ENCODE measurements at regions of chr2 and their contacts with region 1.

Region 1: GRCh38 chr2:160210599-160211138 is 10.6 kb upstream of the ITGB6 start:
- DNase-seq: peak; percentile 92
- H3K4me3 ChIP-seq: no peak overlapping the region
- H3K27ac ChIP-seq: peak overlapping the region; percentile 91
- H3K4me1 ChIP-seq: peaks cover 60% of the 10 kb centered on the region
- H3K27me3 ChIP-seq: no peaks in the 10 kb centered on the region
- CTCF ChIP-seq: peak; percentile 84 to 98
- POLR2A ChIP-seq: no peak

Region 2: DNA sequence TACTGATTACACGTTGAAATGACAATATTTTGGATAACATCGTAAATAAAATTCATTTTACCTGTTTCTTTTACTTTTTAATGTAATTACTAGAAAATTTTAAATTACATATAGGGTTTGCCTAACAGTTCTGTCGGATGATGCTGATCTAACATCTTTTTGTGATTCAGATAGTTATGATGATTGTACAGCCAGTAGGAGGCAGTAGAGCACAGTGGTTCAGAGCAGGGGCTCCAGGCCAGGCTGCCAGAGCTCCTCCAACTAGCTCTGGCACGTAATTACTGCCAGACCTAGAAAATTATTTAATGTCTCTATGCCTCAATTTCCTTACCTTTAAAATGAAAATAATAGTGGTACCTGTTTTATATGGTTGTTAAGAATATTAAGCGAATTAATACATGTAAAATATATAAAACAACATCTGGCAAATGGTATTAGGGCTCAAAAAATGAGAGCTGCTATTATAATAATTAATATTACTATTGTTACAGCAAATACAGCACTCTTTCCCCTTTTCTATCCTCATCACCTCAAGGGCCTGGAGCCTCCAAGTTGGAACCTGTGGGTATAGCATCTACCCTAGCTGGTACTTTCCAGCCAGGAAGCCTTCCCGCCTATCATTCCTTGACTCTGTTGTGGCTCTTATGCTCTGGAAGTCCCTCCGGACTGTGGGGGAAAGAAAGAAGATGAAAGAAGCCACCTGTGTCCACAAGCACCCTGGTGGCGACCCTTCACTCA is 100.6 kb before region 1 on chr2:
- CTCF ChIA-PET with region 1: interaction called, 84 read pairs
- POLR2A ChIA-PET with region 1: no interaction called
- dilution Hi-C with region 1: no loop called
- intact Hi-C with region 1: loop called (anchors 1 kb)
- DNase-seq: peak; percentile 83
- H3K4me3 ChIP-seq: no peak overlapping the region
- H3K27ac ChIP-seq: no peak overlapping the region
- H3K4me1 ChIP-seq: no peaks in the 10 kb centered on the region
- H3K27me3 ChIP-seq: no peaks in the 10 kb centered on the region
- CTCF ChIP-seq: peak; percentile 66 to 72
- POLR2A ChIP-seq: no peak

Region 3: GRCh38 chr2:160194946-160195345 is 15.7 kb before region 1 on chr2:
- CTCF ChIA-PET with region 1: interaction called, 12 read pairs
- POLR2A ChIA-PET with region 1: no interaction called
- dilution Hi-C with region 1: no loop called
- intact Hi-C with region 1: no loop called
- DNase-seq: no peak
- H3K4me3 ChIP-seq: no peak overlapping the region
- H3K27ac ChIP-seq: no peak overlapping the region
- H3K4me1 ChIP-seq: no peaks in the 10 kb centered on the region
- H3K27me3 ChIP-seq: no peaks in the 10 kb centered on the region
- CTCF ChIP-seq: no peak
- POLR2A ChIP-seq: no peak

Region 4: DNA sequence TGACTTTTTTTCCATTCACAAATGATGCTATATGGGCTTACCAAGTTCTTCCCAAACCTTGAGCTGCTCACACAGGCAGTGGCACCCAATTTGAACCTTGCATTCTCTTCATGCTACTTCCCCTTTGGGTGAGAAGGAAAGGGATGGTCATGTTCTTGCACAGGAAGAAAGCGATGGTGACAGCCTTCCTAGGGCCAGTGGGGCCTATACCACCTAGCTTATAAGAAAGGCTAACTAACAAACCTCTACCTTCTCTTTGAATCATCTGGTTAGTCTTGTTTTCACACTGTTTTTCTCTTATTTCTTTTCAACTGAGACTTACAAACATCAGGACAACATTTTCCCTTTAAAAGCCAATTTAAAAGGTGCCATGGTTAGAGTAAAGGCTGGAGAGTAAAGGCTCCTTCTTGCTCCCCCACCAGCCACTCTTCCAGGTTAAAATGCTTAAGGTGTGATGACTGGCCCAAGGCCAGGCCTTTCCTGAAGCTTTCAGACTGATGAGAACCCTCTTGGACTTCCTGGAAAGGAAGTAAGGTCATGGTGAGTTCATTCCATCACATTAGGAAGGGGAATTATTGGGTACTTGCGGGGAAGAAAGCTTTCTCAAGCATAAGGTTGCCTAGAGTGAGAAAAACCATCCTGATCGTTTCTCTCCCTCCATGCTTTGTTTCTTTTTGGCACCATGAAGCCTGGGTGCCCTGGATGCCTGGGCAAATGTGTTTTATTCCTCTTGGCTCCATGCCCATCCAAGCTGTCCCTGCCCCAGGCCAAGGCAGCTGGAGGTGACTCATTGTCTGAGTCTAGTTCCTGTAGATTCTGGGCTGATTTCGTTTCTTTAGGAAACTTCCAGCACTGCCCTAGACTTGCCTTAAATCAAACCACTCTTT is 30.8 kb after region 1 on chr2:
- CTCF ChIA-PET with region 1: interaction called, 11 read pairs
- POLR2A ChIA-PET with region 1: no interaction called
- dilution Hi-C with region 1: no loop called
- intact Hi-C with region 1: loop called (anchors 1 kb)
- DNase-seq: peak; percentile 95
- H3K4me3 ChIP-seq: no peak overlapping the region
- H3K27ac ChIP-seq: peak overlapping the region; percentile 82
- H3K4me1 ChIP-seq: peaks cover 33% of the 10 kb centered on the region
- H3K27me3 ChIP-seq: no peaks in the 10 kb centered on the region
- CTCF ChIP-seq: no peak
- POLR2A ChIP-seq: no peak

Region 5: DNA sequence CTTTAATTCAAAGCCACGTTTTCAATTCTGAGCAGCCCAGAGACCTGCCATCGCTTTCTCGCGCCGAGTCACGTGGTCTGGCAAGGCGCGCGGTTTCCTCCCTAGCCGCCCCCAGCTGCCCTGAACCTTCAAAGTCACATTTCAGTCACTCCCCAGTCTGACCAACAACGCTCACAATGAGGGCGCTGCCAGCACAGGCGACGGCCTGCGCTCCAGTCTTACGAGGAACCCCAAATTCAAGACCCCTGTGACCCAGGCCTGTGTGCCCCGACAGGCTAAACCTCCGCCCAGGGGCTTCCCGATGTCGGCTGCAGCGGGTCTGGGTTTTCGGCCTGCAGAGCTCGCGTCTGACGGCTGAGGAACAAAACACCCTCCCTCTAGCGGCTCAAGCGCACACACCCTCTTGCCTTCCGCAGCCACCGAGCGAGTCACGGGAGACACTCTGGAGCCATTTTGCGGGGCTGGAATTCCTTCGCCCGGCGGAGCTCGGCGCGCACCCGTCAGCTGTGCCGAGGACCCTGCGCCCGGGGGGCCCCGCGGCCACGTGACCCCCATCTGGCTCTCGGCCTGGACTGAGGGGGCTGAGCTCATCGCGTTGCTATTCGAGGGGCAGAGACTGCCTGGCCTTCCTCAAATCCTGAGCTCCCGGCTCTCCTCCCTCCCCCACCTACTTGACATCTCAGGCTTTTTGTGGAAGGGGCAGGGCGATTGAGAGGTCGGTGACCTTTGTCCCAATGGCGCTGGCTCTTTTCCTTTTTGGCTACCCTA is 59.3 kb after region 1 on chr2:
- CTCF ChIA-PET with region 1: interaction called, 29 read pairs
- POLR2A ChIA-PET with region 1: interaction called, 3 read pairs
- dilution Hi-C with region 1: no loop called
- intact Hi-C with region 1: loop called (anchors 1 kb)
- DNase-seq: peak; percentile 92
- H3K4me3 ChIP-seq: peak overlapping the region in 2 of 3 experiments; percentile 34 to 44
- H3K27ac ChIP-seq: peak overlapping the region; percentile 93
- H3K4me1 ChIP-seq: peaks cover 25% of the 10 kb centered on the region
- H3K27me3 ChIP-seq: no peaks in the 10 kb centered on the region
- CTCF ChIP-seq: peak; percentile 65 to 79
- POLR2A ChIP-seq: peak; percentile 76

Region 6: DNA sequence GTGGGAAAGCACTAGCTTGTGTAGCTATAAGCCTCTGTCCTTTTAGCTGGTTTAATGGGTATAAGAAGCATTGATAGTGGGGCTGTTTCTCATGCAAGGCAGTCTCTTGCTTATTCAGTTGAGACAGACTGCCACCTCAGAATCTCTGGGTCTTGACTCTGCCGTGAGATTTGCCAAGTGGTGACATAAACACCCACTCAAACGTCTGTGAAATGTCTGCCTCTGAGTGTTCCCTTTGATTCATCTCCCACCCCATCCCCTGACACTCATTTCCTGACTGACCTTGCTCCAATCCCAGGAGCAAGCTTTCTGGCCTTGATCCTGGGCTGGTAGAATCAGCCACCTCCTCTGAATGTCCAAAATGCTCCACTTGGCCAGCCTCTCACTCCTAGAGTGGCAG is 424.8 kb after region 1 on chr2:
- CTCF ChIA-PET with region 1: no interaction called
- POLR2A ChIA-PET with region 1: no interaction called
- dilution Hi-C with region 1: no loop called
- intact Hi-C with region 1: loop called (anchors 1 kb)
- DNase-seq: no peak
- H3K4me3 ChIP-seq: no peak overlapping the region
- H3K27ac ChIP-seq: no peak overlapping the region
- H3K4me1 ChIP-seq: peaks cover 9% of the 10 kb centered on the region
- H3K27me3 ChIP-seq: no peaks in the 10 kb centered on the region
- CTCF ChIP-seq: no peak
- POLR2A ChIP-seq: no peak

Region 7: DNA sequence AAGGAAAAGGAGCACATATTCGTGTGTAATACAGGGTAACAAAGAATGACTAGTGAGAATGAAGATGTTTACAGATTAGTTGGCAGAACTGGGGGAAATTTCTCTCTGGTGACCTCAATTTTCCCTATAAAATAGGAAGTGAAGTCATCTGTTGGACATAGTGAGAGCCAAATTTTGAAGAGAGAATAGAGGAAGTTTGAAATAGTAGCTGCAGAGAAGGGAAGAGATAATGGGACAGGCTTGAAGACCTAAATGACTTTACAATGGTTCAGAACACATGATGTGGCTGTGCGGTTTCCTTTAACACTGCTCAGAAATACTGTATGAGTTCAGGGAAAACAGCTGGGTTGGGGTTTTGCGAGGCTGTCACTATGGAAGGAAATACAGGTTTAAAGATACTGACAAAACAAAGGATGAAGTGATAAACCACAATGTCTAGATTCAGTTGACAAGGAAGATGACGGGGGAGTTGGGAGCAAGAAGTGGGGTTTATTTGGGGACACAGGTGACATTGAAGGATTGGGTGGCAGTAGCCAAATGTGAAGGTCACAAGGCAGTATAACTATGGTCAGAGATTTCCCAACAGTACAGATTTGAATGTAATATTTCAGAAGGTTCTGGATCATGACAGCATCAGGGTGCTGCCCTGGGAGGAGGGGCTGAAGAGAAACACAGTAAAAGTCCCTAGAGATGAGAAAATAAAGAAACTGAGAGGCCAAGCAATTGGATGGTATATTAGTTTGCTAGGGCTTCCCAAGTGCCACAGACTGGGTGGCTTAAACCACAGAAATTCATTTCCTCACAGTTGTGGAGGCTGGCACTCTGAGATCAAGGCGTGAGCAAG is 866.9 kb after region 1 on chr2:
- CTCF ChIA-PET with region 1: no interaction called
- POLR2A ChIA-PET with region 1: no interaction called
- dilution Hi-C with region 1: no loop called
- intact Hi-C with region 1: loop called (anchors 5 kb)
- DNase-seq: peak; percentile 99
- H3K4me3 ChIP-seq: no peak overlapping the region
- H3K27ac ChIP-seq: peak overlapping the region; percentile 99
- H3K4me1 ChIP-seq: peaks cover 37% of the 10 kb centered on the region
- H3K27me3 ChIP-seq: no peaks in the 10 kb centered on the region
- CTCF ChIP-seq: no peak
- POLR2A ChIP-seq: no peak